ENCODE measurements at regions of chr6 and their contacts with region 1.

Region 1: DNA sequence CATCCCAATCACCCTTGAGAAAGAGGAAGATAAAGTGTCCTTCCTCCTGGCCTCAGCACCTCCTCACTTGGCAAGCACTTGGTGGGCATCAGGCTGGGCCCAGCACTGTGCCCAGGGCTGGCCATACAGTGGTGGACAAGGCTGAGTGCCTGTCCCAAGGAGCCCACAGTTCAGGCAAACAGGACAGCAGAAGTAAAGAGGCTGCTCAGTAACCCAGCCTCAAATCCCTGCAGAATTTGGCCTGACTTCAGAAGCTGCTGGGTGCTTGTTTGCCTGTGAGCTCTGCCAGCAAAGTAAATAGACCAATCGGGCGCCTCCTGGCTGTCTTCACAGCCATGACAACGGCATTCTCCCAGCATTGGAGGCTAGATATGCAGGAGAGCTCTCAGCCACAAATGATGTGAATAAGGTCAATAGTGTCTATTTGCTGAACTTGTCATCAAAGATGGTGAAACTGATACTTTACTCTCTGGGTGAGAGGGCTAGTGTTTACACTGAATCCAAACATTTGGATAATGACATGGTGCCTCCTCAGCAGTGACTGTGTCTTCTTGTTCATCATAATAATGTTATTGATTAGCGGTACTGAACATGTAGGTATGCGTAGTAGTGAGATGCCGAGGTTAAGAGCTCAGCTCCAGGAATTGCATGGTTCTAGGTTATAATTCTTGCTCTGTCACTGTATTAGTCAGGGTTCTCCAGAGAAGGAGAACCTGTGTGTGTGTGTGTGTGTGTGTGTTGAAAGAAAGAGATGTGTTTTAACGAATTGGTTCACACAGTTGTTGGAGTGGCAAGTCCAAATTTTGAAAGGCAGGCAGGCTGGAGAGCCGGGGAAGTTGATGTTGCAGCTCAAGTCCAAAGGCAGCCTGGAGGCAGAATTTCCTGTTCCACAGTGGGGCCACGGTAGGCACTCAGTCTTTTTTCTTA is 36.8 kb upstream of the FANCE start:
- DNase-seq: peak; percentile 77
- H3K4me3 Mint-ChIP-seq: no peak overlapping the region
- H3K27ac Mint-ChIP-seq: no peak overlapping the region
- H3K4me1 Mint-ChIP-seq: peaks cover 13% of the 10 kb centered on the region
- H3K27me3 Mint-ChIP-seq: no peaks in the 10 kb centered on the region
- CTCF ChIP-seq: peak; percentile 74

Region 2: DNA sequence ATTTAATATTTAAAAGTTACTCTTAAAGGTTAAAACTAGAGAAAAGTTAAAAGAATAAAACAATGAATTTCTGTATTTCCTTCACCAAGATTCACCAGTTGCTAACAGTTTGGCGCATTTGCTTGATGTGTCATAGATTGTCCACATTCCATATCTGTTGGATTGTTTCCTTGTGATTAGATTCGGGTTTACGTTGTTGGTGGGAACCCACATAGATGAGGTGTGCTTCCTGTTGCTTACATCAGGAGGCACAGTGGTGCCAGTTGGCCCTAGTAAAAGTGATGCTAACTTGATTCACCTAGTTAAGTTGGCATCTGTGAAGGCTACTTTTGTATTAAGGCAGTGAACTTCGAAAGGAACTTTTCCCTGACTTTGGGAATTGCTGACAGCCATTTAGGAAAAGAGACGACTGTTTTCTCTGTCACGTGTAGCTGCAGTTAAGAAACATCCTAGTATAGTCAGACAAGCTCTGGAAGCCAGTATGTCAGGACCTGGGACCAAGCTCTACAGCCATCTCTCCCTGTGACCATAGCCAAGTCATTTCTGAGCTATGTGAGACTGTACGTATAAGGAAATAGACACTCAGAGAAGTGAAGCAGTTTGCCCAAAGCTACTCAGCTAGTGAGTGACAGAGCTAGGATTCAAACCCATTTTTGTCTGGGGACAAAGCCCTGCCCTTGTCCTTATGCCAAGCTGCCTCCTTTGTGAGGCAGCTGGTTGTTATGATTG is 23.9 kb before region 1 on chr6:
- CTCF ChIA-PET with region 1: interaction called, 15 read pairs
- intact Hi-C with region 1: no loop called
- DNase-seq: peak; percentile 71
- H3K4me3 Mint-ChIP-seq: no peak overlapping the region
- H3K27ac Mint-ChIP-seq: peak overlapping the region; percentile 62
- H3K4me1 Mint-ChIP-seq: peaks cover 67% of the 10 kb centered on the region
- H3K27me3 Mint-ChIP-seq: no peaks in the 10 kb centered on the region
- CTCF ChIP-seq: no peak

Region 3: DNA sequence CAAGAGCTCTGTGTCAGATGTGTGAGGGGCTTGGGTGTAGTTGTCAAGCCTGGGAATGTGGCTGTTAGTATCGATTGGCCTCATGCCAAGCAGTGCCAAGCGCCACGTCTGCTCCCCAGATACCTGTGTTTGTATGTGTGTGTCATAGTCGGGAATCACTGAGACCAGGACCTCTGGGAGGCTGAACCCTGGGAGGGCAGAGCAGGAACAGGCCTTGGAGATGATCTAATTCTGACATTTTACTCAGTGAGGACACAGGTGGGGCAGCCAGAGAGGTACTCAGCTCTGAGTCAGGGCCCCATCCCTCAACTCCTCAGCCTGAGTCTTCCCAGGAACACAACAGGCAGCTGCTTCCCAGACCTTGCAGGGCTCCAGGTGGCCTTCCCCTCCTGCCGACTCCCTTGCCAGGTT is 14.4 kb before region 1 on chr6:
- CTCF ChIA-PET with region 1: interaction called, 11 read pairs
- intact Hi-C with region 1: no loop called
- DNase-seq: peak; percentile 85
- H3K4me3 Mint-ChIP-seq: peak overlapping the region; percentile 21
- H3K27ac Mint-ChIP-seq: peak overlapping the region; percentile 64
- H3K4me1 Mint-ChIP-seq: peaks cover 47% of the 10 kb centered on the region
- H3K27me3 Mint-ChIP-seq: no peaks in the 10 kb centered on the region
- CTCF ChIP-seq: no peak

Measured in Calu3 (cell line).